Common myeloid progenitor, CD34-positive (primary cell): ENCODE measurements at regions of chr1 and their contacts with region 1.

Region 1: DNA sequence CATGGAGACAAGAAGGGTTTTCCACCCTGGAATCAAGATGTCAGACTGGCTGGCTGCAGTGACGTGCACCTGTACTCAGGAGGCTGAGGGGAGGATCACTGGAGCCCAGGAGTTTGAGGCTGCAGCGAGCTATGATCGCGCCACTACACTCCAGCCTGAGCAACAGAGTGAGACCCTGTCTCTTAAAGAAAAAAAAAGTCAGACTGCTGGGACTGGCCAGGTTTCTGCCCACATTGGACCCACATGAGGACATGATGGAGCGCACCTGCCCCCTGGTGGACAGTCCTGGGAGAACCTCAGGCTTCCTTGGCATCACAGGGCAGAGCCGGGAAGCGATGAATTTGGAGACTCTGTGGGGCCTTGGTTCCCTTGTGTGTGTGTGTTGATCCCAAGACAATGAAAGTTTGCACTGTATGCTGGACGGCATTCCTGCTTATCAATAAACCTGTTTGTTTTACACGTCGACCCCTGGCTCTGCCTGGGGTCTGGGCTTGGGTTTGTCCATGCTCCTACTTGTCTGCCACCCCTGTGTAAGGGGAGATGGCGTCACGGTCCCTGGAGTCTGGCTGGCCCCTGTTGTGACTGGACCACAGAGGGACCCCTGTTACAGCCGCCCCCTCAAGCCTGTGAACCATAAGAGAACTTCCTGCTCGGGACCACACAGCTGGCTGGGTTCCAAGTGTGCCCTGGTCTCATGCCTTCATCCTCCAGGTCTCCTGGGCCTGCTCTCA is 20.9 kb upstream of the VPS13D start:
- DNase-seq: peak; percentile 80 to 88 (median 82)
- H3K4me3 ChIP-seq: peak overlapping the region in 2 of 7 experiments; percentile 2 to 5
- H3K27ac ChIP-seq: no peak overlapping the region
- H3K4me1 ChIP-seq: peaks cover 7 to 32% (median 27%) of the 10 kb centered on the region in 4 experiments
- H3K27me3 ChIP-seq: no peaks in the 10 kb centered on the region

Region 2: GRCh38 chr1:12113433-12114339 is 95.2 kb before region 1 on chr1:
- CTCF ChIA-PET with region 1: interaction called, 213 read pairs
- POLR2A ChIA-PET with region 1: no interaction called
- DNase-seq: peak in 2 of 3 donors; percentile 37 to 45
- H3K4me3 ChIP-seq: no peak overlapping the region
- H3K27ac ChIP-seq: no peak overlapping the region
- H3K4me1 ChIP-seq: no peaks in the 10 kb centered on the region
- H3K27me3 ChIP-seq: no peaks in the 10 kb centered on the region

Region 3: GRCh38 chr1:12161662-12162458 is 47.1 kb before region 1 on chr1:
- CTCF ChIA-PET with region 1: interaction called, 10 read pairs
- POLR2A ChIA-PET with region 1: interaction called, 4 read pairs
- DNase-seq: peak; percentile 93 to 99 (median 98)
- H3K4me3 ChIP-seq: peak overlapping the region in 2 of 7 experiments; percentile 11 to 38
- H3K27ac ChIP-seq: no peak overlapping the region
- H3K4me1 ChIP-seq: peaks cover 18 to 86% (median 52%) of the 10 kb centered on the region in 4 experiments
- H3K27me3 ChIP-seq: no peaks in the 10 kb centered on the region

Region 4: DNA sequence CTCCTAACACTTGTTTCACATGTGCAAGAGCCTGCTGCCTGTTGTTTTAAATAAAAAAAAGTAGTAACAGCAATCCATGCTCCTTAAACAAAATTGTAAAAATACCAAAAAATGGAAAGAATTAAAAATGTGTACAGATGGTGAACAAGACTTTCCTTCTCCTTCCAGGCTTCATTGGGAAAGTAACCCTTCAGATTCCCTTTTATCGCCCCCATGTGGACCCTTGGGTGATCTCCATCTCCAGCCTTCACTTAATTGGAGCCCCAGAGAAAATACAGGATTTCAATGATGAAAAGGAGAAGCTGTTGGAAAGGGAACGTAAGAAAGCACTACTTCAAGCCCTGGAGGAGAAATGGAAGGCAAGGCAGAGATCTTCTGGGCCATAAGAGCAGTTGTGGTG is 35.1 kb after region 1 on chr1:
- CTCF ChIA-PET with region 1: no interaction called
- POLR2A ChIA-PET with region 1: no interaction called
- DNase-seq: peak in 2 of 3 donors; percentile 6 to 33
- H3K4me3 ChIP-seq: no peak overlapping the region
- H3K27ac ChIP-seq: no peak overlapping the region
- H3K4me1 ChIP-seq: no peaks in the 10 kb centered on the region
- H3K27me3 ChIP-seq: no peaks in the 10 kb centered on the region